ENCODE measurements at regions of chr3 and their contacts with region 1.

Region 1: DNA sequence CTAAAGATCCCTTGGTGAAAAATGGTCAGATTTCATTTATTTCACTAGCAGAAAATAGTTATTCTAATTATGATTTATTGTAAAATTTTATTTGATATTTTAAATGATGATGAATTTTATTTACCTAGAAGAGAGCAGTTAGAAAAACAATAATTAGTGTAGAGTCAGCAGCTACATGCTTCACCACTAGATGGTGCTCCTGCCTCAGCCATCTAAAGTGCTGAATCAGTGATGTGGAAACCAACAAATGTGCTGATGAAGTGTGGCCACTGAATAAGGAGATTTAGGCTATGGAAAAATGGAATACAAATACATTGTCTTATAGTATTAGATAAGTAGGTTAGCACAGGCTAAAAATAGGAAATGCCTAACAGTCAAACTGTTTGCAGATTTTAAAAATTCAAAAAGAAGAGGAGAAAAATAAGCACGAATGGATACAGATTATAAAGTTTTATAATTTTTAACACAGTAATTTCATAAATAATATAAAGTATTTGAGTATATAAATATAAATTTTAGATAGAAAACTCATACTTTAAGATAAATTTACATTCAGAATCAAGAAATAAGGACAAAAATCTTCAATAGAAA is 109.8 kb downstream of the PPP2R3A start:
- DNase-seq: peak; percentile 52 to 85 (median 74)
- ATAC-seq: peak; percentile 55
- H3K4me3 ChIP-seq: no peak overlapping the region
- H3K4me3 Mint-ChIP-seq: no peak overlapping the region
- H3K27ac ChIP-seq: no peak overlapping the region
- H3K27ac Mint-ChIP-seq: no peak overlapping the region
- H3K4me1 ChIP-seq: no peaks in the 10 kb centered on the region
- H3K4me1 Mint-ChIP-seq: peaks cover 4% of the 10 kb centered on the region
- H3K27me3 ChIP-seq: no peaks in the 10 kb centered on the region
- H3K27me3 Mint-ChIP-seq: no peaks in the 10 kb centered on the region
- CTCF ChIP-seq: peak; percentile 99

Region 2: DNA sequence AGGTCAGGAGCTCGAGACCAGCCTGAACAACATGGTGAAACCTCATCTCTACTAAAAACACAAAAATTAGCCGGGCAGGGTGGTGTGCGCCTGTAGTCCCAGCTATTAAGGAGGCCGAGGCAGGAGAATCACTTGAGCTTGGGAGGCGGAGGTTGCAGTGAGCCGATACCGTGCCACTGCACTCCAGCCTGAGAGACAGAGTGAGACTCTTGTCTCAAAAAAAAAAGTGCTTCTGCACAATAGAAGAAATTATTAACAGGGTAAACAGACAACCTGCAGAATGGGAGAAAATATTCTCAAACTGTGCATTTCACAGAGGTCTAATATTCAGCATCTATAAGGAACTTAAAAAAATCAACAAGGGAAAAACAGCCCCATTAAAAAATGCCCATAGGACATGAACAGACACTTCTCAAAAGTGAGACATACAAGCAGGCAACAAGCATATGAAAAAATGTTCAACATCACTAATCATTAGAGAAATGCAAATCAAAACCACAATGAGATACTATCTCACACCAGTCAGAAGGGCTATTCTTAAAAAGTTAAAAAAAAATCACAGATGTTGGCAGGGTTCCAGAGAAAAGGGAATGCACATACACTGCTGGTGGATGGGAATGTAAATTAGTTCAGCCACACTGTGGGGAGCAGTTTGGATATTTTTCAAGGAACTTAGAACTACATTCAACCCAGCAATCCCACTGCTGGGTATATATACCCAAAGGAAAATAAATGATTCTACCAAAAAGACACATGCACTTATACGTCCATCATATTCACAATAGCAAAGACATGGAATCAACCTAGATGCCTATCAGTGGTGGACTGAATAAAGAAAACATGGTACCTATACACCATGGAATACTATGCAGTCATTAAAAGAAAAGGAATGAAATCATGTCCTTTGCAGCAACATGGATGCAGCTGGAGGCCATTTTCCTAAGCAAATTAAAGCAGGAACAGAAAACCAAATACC is 45.3 kb after region 1 on chr3:
- CTCF ChIA-PET with region 1: no interaction called
- POLR2A ChIA-PET with region 1: no interaction called
- intact Hi-C with region 1: no loop called
- DNase-seq: no peak
- ATAC-seq: no peak
- H3K4me3 ChIP-seq: no peak overlapping the region
- H3K4me3 Mint-ChIP-seq: no peak overlapping the region
- H3K27ac ChIP-seq: no peak overlapping the region
- H3K27ac Mint-ChIP-seq: no peak overlapping the region
- H3K4me1 ChIP-seq: no peaks in the 10 kb centered on the region
- H3K4me1 Mint-ChIP-seq: no peaks in the 10 kb centered on the region
- H3K27me3 ChIP-seq: no peaks in the 10 kb centered on the region
- H3K27me3 Mint-ChIP-seq: no peaks in the 10 kb centered on the region
- CTCF ChIP-seq: no peak

Region 3: DNA sequence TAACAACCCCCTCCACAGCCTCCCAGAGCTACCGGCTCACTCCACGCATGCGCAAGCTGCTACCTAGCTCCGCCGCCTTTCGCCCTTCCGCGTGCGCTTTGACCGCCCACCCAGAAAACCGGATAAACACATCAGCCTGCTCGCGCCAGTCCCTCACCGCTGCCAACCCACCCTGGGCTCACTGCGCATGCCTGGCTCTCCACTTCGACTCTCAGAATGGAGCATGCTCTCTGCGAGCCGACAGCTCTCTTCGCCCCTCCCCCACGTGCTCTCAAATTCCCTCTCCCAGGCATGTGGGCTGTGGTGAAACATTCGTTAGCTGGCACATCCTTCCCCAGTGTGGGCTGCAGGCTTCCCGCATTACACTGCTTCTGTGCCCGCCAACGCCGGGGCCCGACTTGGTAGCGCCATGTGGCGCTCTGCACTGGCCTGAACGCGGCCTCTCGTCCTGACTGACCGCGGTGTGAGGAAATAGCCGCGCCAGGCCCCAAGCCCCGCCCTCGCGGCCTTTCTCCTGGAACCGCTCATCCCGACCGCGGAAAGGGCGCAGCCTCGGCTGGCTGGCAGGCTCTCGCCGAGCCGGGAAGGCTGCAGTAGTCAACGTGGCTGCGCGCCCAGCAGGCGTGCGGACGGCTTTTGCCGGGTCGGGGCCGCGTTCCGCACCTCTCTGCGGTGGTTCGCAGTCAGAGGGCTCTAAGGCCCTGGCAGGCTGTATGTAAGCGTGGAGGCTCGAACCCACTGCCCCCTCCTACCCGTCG is 121.3 kb after region 1 on chr3:
- CTCF ChIA-PET with region 1: no interaction called
- POLR2A ChIA-PET with region 1: no interaction called
- intact Hi-C with region 1: loop called in 1 of 2 experiments (anchors 1 kb)
- DNase-seq: peak; percentile 95 to 99 (median 99)
- ATAC-seq: peak; percentile 60
- H3K4me3 ChIP-seq: peak overlapping the region; percentile 84 to 91
- H3K4me3 Mint-ChIP-seq: peak overlapping the region; percentile 99
- H3K27ac ChIP-seq: peak overlapping the region; percentile 71 to 96
- H3K27ac Mint-ChIP-seq: peak overlapping the region; percentile 100
- H3K4me1 ChIP-seq: peaks cover 16% of the 10 kb centered on the region
- H3K4me1 Mint-ChIP-seq: peaks cover 37% of the 10 kb centered on the region
- H3K27me3 ChIP-seq: no peaks in the 10 kb centered on the region
- H3K27me3 Mint-ChIP-seq: no peaks in the 10 kb centered on the region
- CTCF ChIP-seq: no peak

Region 4: DNA sequence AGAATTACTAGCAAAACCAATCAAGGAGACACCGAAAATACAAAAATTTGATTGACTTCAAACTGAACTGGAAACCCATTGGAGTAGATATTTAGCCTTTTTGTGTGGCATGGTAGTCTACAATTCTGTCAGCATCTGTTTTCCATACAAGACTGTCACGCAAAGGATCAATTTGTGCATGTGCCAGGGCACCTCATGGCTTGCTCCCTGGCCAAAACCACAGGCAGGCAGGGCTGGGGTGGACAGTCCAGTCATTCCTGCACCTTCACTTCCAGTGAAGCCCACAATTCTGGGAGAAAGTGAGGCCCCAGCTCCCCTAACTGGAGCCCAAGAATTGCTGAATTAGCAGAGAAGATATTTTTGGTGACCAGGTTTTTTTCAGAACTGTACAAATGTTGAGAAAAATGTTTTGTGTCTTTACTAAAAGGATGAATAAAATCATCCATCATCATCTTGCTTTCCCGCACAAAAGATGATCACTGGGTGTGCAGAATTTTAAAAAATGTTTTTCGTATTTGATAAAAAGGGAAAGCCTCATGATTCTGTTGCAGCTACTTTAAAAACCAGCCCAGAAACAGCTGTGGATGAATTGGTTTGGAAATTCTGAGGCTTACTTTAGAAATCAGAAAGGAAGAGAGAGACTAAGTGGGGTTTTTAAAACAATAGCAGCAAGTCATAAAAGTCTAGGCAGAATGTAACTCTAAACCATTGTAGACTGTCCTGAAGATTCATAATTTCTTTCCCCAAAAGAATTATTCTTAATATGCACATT is 261.2 kb after region 1 on chr3:
- CTCF ChIA-PET with region 1: no interaction called
- POLR2A ChIA-PET with region 1: no interaction called
- intact Hi-C with region 1: loop called in 1 of 2 experiments (anchors 5 kb)
- DNase-seq: no peak
- ATAC-seq: no peak
- H3K4me3 ChIP-seq: no peak overlapping the region
- H3K4me3 Mint-ChIP-seq: no peak overlapping the region
- H3K27ac ChIP-seq: no peak overlapping the region
- H3K27ac Mint-ChIP-seq: peak overlapping the region; percentile 52
- H3K4me1 ChIP-seq: no peaks in the 10 kb centered on the region
- H3K4me1 Mint-ChIP-seq: no peaks in the 10 kb centered on the region
- H3K27me3 ChIP-seq: no peaks in the 10 kb centered on the region
- H3K27me3 Mint-ChIP-seq: no peaks in the 10 kb centered on the region
- CTCF ChIP-seq: no peak

Region 5: GRCh38 chr3:137013955-137014688 is 938.8 kb after region 1 on chr3:
- CTCF ChIA-PET with region 1: interaction called, 23 read pairs
- POLR2A ChIA-PET with region 1: interaction called, 3 read pairs
- intact Hi-C with region 1: loop called (anchors 1 kb)
- DNase-seq: peak; percentile 73 to 93 (median 85)
- ATAC-seq: peak; percentile 84
- H3K4me3 ChIP-seq: peak overlapping the region; percentile 34 to 44
- H3K4me3 Mint-ChIP-seq: peak overlapping the region; percentile 68
- H3K27ac ChIP-seq: no peak overlapping the region
- H3K27ac Mint-ChIP-seq: no peak overlapping the region
- H3K4me1 ChIP-seq: no peaks in the 10 kb centered on the region
- H3K4me1 Mint-ChIP-seq: peaks cover 8% of the 10 kb centered on the region
- H3K27me3 ChIP-seq: no peaks in the 10 kb centered on the region
- H3K27me3 Mint-ChIP-seq: no peaks in the 10 kb centered on the region
- CTCF ChIP-seq: peak; percentile 95

Region 6: GRCh38 chr3:137946345-137946973 is 1871.1 kb after region 1 on chr3:
- CTCF ChIA-PET with region 1: no interaction called
- POLR2A ChIA-PET with region 1: no interaction called
- intact Hi-C with region 1: loop called (anchors 2 to 5 kb)
- DNase-seq: peak in 8 of 9 experiments; percentile 24 to 69 (median 44)
- ATAC-seq: no peak
- H3K4me3 ChIP-seq: no peak overlapping the region
- H3K4me3 Mint-ChIP-seq: no peak overlapping the region
- H3K27ac ChIP-seq: no peak overlapping the region
- H3K27ac Mint-ChIP-seq: no peak overlapping the region
- H3K4me1 ChIP-seq: no peaks in the 10 kb centered on the region
- H3K4me1 Mint-ChIP-seq: no peaks in the 10 kb centered on the region
- H3K27me3 ChIP-seq: no peaks in the 10 kb centered on the region
- H3K27me3 Mint-ChIP-seq: no peaks in the 10 kb centered on the region
- CTCF ChIP-seq: peak; percentile 65